AG04449 (cell line): ENCODE measurements at regions of chr1 and their contacts with region 1.

Region 1: GRCh38 chr1:110495926-110496600 is 22.9 kb downstream of the KCNA10 start:
- DNase-seq: peak; percentile 28
- H3K4me3 ChIP-seq: no peak overlapping the region
- CTCF ChIP-seq: peak; percentile 78

Region 2: DNA sequence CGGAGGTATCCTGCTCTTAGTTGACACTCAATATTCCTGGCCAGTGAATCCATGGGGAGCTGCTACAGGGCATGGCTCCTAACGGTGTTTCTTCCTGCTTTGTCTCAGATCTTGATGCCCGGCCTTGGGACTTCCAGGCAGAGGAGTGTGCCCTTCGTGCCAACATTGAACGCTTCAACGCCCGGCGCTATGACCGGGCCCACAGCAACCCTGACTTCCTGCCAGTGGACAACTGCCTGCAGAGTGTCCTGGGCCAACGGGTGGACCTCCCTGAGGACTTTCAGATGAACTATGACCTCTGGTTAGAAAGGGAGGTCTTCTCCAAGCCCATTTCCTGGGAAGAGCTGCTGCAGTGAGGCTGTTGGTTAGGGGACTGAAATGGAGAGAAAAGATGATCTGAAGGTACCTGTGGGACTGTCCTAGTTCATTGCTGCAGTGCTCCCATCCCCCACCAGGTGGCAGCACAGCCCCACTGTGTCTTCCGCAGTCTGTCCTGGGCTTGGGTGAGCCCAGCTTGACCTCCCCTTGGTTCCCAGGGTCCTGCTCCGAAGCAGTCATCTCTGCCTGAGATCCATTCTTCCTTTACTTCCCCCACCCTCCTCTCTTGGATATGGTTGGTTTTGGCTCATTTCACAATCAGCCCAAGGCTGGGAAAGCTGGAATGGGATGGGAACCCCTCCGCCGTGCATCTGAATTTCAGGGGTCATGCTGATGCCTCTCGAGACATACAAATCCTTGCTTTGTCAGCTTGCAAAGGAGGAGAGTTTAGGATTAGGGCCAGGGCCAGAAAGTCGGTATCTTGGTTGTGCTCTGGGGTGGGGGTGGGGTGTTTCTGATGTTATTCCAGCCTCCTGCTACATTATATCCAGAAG is 442.3 kb before region 1 on chr1:
- CTCF ChIA-PET with region 1: interaction called, 30 read pairs
- POLR2A ChIA-PET with region 1: no interaction called
- DNase-seq: no peak
- H3K4me3 ChIP-seq: no peak overlapping the region
- CTCF ChIP-seq: peak; percentile 93

Region 3: DNA sequence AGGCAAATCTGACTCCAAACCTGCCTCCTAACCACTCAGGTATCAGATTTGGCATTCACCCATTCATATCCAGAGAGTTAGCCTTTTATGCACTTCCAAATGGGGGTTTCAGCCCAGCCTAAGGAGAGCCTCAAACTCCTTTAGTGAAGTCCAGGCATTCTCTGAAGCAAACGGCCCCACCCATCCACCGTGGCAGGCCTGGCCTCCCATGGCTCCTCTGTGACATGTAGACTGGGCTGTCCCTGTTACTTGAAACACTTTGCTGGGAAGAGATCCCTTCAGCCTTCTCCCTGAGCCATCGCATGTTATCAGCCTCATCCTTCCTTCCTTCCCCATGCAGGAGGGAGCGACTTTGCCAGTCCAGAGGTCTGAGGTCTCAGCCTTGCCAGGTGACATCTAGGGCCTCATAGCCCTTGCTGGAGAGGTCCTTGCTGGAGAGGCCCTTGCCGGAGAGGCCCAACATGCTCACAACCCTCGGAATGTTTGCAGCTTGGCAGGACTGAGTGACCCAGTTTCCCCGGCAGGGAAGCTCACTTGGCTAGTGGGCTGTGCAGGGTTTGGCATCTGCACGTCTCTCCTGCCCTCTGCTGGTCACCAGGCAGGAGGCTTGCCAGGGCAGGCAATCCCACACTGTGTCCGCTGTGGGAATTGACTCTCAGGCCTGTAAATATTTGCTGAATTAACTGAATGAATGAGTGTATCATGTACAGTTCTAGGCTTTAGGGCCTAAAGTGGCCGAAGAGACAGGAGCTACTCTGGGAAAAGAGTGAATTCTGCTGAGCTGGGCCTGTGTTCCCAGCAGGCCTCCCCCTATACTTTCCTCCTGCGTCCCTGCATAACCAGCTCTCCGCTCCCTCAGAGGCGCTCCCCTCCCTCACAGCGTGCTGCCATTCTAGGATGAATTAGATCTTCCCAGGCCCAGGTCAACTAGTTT is 183.6 kb before region 1 on chr1:
- CTCF ChIA-PET with region 1: interaction called, 28 read pairs
- POLR2A ChIA-PET with region 1: no interaction called
- DNase-seq: no peak
- H3K4me3 ChIP-seq: no peak overlapping the region
- CTCF ChIP-seq: peak; percentile 97

Region 4: DNA sequence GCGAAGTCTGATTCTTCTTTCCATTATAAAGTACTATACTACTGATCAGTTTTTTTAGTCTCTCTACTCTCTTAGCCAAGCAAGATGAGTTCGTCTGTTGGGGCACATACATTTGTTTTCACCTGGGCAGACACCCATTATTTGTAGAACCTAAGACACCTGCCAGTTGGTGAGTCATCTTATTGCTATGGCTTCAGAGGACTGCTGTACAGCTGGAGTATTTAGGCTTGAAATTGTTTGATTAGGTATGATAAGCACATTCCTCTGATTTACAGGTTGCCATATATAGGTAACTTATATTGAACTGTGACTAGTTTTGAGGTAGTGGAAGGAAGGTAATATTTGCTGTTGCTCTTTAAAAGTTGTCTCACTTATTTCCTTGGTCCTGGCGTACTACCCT is 139.7 kb before region 1 on chr1:
- CTCF ChIA-PET with region 1: no interaction called
- POLR2A ChIA-PET with region 1: no interaction called
- DNase-seq: no peak
- H3K4me3 ChIP-seq: no peak overlapping the region
- CTCF ChIP-seq: no peak

Region 5: DNA sequence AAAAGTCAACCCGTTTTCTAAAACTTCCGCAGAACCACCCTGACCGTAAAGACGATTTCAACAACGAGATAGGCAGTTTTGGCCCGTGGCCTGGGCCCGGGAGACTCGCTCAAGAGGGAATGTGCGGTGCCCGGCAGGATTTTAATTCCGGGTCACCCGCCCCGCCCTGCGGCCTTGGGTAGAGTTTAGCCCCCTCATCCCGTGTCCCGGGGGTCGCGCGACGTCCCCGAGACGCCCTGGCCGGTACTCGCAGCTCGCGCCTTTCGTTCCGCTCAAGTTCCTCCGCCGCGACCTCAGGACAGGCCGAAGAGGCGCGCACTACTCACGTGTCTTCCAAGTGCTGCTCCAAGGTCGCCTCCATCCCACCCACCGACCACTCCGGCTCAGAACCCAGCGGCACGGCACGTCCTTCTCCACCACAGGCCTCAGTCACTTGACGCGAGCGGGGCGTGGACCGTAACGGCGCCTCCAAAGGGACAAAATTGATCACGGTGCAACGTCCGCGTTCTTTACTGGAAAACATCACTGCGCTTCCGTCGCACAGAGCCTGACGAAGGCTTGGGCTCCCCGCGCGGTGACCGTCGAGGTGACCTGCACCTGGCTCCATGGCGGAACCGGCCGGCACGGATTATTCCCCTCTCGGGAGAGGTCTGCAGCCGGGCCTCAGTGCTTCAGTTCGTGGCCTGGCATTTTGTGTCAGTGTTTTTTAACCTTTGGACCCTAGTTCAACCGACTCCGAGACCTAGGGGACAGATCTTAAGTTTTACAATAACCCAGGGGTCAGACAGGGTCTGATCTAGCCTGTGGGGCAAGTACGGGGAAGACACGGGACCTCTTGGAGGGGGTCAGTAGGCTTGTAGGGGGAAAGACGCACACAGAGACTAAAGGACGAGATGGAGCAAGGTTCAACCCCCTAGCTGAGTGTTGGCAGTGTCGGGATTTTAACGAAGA is 88.5 kb before region 1 on chr1 and contains the start of gene LAMTOR5:
- CTCF ChIA-PET with region 1: interaction called, 238 read pairs
- POLR2A ChIA-PET with region 1: no interaction called
- DNase-seq: peak; percentile 55
- H3K4me3 ChIP-seq: peak within 1 kb of the TSS; percentile 98
- CTCF ChIP-seq: no peak

Region 6: GRCh38 chr1:110477041-110477440 is 19.0 kb before region 1 on chr1:
- CTCF ChIA-PET with region 1: interaction called, 105 read pairs
- POLR2A ChIA-PET with region 1: no interaction called
- DNase-seq: no peak
- H3K4me3 ChIP-seq: no peak overlapping the region
- CTCF ChIP-seq: no peak

Region 7: DNA sequence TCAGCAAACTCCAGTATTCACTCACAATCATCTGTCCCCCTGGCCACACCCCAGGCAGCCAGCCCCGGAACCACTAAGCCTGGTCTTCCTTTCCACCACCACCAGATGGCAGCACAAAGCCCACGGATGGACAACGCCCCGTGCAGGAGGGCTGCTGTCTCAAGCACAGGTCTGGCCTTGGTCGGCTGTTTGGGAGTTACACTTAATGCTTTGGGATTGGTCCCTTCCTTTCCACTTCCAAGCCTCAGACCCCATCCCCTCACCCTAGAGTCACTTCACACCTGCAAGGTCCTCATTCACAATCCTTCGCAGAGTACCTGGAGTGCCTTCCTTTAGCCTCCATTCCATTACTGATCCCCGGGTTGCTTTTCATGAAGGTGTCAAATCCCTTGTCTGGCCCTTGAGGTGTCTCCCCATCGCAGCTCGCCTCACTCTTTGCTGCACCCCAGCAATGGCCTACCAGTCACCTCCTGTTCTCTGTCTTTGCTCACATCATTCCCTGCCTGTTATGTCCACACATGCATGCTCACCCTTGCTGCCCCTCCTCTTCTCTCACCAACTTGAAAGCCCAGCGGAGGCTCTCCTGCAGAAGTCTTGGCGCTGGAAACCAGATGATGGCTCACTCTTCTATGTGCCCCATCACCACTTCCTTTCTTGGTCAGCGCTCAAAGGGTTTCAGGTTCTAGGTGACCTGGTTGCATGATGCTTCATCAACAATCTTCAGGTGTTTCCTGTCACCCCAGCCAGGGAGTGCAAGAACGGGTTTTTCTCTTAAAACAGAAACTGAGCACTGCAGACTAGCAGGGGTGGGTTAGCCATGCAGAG is 135.0 kb after region 1 on chr1:
- CTCF ChIA-PET with region 1: no interaction called
- POLR2A ChIA-PET with region 1: no interaction called
- DNase-seq: no peak
- H3K4me3 ChIP-seq: no peak overlapping the region
- CTCF ChIP-seq: peak; percentile 83